ENCODE measurements at regions of chr10 and their contacts with region 1.

Region 1: GRCh38 chr10:100508691-100509150 is 10.9 kb downstream of the SEC31B start:
- DNase-seq: peak; percentile 90
- H3K4me3 Mint-ChIP-seq: peak overlapping the region; percentile 80
- H3K27ac Mint-ChIP-seq: peak overlapping the region; percentile 89
- H3K4me1 Mint-ChIP-seq: peaks cover 91% of the 10 kb centered on the region
- H3K27me3 Mint-ChIP-seq: no peaks in the 10 kb centered on the region

Region 2: DNA sequence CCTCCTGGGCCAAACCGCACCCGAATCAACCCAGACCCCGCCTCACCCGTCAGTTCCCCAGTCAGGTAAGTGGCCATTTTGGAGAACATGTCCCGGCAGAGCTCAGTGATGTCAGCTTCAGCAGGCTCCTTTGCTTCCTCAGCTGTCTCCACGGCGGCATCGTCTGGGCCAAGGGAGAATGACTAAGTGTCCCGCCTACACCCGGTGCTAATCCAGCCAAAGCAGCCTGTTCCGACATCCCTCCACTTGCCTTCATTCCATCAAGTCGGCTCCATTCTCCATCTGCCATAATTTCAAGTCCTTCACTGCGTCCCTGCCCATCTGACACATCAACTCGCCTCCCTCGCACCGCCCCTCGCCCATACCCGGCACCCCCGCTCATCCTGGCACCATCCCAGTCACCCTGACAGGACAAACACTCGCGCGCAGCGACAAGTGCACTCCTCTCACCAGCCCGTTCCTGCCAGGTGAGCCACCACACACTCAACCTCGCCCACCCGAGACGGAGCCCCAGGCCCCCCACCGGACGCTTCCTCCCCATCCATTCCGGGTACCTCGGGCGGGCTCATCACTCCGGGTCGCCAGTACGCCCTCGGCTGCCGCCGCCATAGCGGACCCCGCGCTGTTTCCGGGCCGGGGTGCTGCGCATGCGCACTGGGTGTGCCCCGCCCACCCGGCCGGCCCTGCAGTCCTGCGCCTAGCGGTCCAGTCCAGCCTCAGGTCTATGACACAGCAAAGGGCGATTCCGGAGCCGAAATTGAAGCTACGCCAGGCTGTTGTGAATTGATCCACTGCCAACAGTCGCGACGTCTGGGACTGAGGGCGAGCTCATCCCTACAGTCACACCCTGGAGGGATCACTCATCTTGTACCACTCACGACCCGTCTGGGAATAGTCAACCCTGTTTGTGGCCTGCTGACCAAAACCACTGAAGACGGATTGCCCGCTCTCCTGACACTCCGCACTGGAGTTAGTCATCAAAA is 222.4 kb before region 1 on chr10 and contains the start of gene BLOC1S2:
- intact Hi-C with region 1: loop called (anchors 5 kb)
- DNase-seq: peak; percentile 98
- H3K4me3 Mint-ChIP-seq: peak within 1 kb of the TSS; percentile 97
- H3K27ac Mint-ChIP-seq: peak within 1 kb of the TSS; percentile 98
- H3K4me1 Mint-ChIP-seq: peaks cover 18% of the 10 kb centered on the region
- H3K27me3 Mint-ChIP-seq: peaks cover under 1% of the 10 kb centered on the region
- total RNA-seq, gene BLOC1S2: 62.0 and 62.5 TPM in 2 replicates

Region 3: GRCh38 chr10:100327007-100327717 is 181.6 kb before region 1 on chr10:
- intact Hi-C with region 1: no loop called
- DNase-seq: peak; percentile 86
- H3K4me3 Mint-ChIP-seq: peak overlapping the region; percentile 55
- H3K27ac Mint-ChIP-seq: peak overlapping the region; percentile 84
- H3K4me1 Mint-ChIP-seq: peaks cover 15% of the 10 kb centered on the region
- H3K27me3 Mint-ChIP-seq: peaks cover 15% of the 10 kb centered on the region

Region 4: DNA sequence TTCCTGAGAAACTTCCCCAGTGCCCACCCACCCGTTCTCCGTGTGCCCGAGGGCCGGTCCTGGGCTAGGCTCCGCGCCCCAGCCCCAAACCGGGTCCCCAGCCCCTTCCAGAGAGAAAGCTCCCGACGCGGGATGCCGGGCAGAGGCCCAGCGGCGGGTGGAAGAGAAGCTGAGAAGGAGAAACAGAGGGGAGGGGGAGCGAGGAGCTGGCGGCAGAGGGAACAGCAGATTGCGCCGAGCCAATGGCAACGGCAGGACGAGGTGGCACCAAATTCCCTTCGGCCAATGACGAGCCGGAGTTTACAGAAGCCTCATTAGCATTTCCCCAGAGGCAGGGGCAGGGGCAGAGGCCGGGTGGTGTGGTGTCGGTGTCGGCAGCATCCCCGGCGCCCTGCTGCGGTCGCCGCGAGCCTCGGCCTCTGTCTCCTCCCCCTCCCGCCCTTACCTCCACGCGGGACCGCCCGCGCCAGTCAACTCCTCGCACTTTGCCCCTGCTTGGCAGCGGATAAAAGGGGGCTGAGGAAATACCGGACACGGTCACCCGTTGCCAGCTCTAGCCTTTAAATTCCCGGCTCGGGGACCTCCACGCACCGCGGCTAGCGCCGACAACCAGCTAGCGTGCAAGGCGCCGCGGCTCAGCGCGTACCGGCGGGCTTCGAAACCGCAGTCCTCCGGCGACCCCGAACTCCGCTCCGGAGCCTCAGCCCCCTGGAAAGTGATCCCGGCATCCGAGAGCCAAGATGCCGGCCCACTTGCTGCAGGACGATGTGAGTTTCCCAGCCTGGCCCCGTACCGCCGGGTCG is 161.8 kb before region 1 on chr10 and contains the start of gene SCD:
- intact Hi-C with region 1: loop called (anchors 1 kb)
- DNase-seq: peak; percentile 97
- H3K4me3 Mint-ChIP-seq: peak within 1 kb of the TSS; percentile 97
- H3K27ac Mint-ChIP-seq: peak within 1 kb of the TSS; percentile 94
- H3K4me1 Mint-ChIP-seq: peaks cover 58% of the 10 kb centered on the region
- H3K27me3 Mint-ChIP-seq: no peaks in the 10 kb centered on the region
- total RNA-seq, gene SCD: 252 and 256 TPM in 2 replicates

Region 5: GRCh38 chr10:100481462-100482081 is 27.1 kb before region 1 on chr10:
- intact Hi-C with region 1: loop called (anchors 1 kb)
- DNase-seq: peak; percentile 98
- H3K4me3 Mint-ChIP-seq: peak overlapping the region; percentile 86
- H3K27ac Mint-ChIP-seq: no peak overlapping the region
- H3K4me1 Mint-ChIP-seq: peaks cover 28% of the 10 kb centered on the region
- H3K27me3 Mint-ChIP-seq: peaks cover 3% of the 10 kb centered on the region

Region 6: GRCh38 chr10:100518761-100519241 is 10.1 kb after region 1 on chr10:
- intact Hi-C with region 1: loop called (anchors 1 kb)
- DNase-seq: peak; percentile 92
- H3K4me3 Mint-ChIP-seq: no peak overlapping the region
- H3K27ac Mint-ChIP-seq: peak overlapping the region; percentile 34
- H3K4me1 Mint-ChIP-seq: peaks cover 34% of the 10 kb centered on the region
- H3K27me3 Mint-ChIP-seq: no peaks in the 10 kb centered on the region

Region 7: GRCh38 chr10:100621360-100622205 is 112.9 kb after region 1 on chr10:
- intact Hi-C with region 1: no loop called
- DNase-seq: peak; percentile 79
- H3K4me3 Mint-ChIP-seq: peak overlapping the region; percentile 45
- H3K27ac Mint-ChIP-seq: no peak overlapping the region
- H3K4me1 Mint-ChIP-seq: no peaks in the 10 kb centered on the region
- H3K27me3 Mint-ChIP-seq: peaks cover 54% of the 10 kb centered on the region